Mammary epithelial cell (primary cell): ENCODE measurements at regions of chr10 and their contacts with region 1.

Region 1: DNA sequence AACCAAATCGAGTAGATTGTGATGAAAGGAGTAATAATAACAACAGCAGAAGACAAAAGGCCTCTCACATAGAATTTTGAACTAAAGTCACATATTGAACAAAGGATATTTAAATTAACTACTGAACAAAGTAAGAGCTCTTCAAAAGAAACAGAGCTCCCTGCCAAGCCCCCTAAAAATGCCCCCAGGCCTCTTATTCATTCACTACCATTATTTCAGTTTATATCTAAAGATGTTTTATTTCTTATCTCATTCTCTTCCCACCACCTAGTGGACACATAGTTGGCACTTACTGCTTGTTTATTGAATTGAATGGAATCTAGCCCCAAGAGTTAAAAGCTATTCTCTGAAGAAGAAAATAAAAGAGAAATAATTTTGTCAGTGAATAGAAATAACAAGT is 37.4 kb downstream of the VCL start:
- DNase-seq: no peak
- H3K4me3 ChIP-seq: no peak overlapping the region
- H3K27ac ChIP-seq: no peak overlapping the region
- H3K4me1 ChIP-seq: no peaks in the 10 kb centered on the region
- H3K27me3 ChIP-seq: no peaks in the 10 kb centered on the region
- CTCF ChIP-seq: peak; percentile 27 to 43

Region 2: GRCh38 chr10:73730153-73730906 is 305.0 kb before region 1 on chr10:
- CTCF ChIA-PET with region 1: no interaction called
- dilution Hi-C with region 1: no loop called
- in situ Hi-C with region 1: no loop called
- intact Hi-C with region 1: no loop called
- DNase-seq: peak; percentile 95
- H3K4me3 ChIP-seq: peak overlapping the region; percentile 81 to 94 (median 82)
- H3K27ac ChIP-seq: peak overlapping the region; percentile 68
- H3K4me1 ChIP-seq: peaks cover 4% of the 10 kb centered on the region
- H3K27me3 ChIP-seq: no peaks in the 10 kb centered on the region
- CTCF ChIP-seq: no peak

Region 3: DNA sequence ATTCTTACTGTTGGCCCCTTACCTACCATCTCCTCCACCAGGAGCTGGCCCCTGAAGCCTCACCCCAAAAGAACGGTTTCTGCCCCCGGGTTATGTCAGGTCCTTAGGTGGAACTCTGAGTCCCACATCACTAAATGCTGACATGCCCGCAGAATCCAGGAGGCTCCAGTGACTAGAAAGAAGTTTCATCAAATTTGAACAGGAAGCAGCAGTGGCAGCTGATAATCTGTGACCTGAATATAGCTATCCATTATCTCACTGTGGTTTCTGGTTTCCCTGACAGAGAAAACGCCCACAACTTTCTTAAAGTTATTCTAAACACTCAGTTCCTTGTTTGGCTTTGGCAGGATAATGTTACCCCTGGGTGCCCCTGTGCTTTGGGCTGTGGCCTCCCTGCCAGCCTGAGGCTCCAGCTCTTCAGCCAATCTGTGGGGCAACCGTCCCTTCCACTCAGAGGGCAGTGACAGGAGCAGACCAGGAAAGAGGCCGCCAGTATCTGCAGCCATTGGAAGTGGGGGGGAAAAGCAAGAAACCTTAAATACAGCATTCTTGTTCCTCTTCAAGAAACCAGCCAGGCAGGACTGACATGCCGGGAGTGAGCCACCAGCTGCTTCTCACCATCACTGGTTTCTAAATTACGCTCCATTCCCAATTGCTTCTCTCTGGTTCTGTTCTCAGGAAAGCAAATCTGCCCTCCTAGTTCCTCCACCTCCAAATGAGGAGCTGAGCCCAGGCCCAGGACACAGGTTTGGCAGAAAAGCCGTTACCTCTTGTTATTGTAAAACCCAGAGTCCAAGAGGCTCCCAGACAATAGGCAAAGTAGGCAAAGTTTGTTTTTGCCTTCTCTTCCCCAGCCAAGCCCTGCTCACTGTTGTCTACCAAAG is 78.6 kb before region 1 on chr10:
- CTCF ChIA-PET with region 1: no interaction called
- dilution Hi-C with region 1: no loop called
- in situ Hi-C with region 1: no loop called
- intact Hi-C with region 1: loop called (anchors 10 kb)
- DNase-seq: peak; percentile 55
- H3K4me3 ChIP-seq: no peak overlapping the region
- H3K27ac ChIP-seq: no peak overlapping the region
- H3K4me1 ChIP-seq: peaks cover 13% of the 10 kb centered on the region
- H3K27me3 ChIP-seq: no peaks in the 10 kb centered on the region
- CTCF ChIP-seq: no peak

Region 4: GRCh38 chr10:73997787-73998622 is 37.3 kb before region 1 on chr10 and contains the start of gene VCL:
- CTCF ChIA-PET with region 1: no interaction called
- dilution Hi-C with region 1: no loop called
- in situ Hi-C with region 1: no loop called
- intact Hi-C with region 1: loop called (anchors 1 kb)
- DNase-seq: peak; percentile 99
- H3K4me3 ChIP-seq: peak within 1 kb of the TSS; percentile 61 to 92 (median 90)
- H3K27ac ChIP-seq: peak within 1 kb of the TSS; percentile 72
- H3K4me1 ChIP-seq: peaks cover 26% of the 10 kb centered on the region
- H3K27me3 ChIP-seq: no peaks in the 10 kb centered on the region
- CTCF ChIP-seq: no peak
- total RNA-seq, gene VCL: 136 to 172 TPM

Region 5: DNA sequence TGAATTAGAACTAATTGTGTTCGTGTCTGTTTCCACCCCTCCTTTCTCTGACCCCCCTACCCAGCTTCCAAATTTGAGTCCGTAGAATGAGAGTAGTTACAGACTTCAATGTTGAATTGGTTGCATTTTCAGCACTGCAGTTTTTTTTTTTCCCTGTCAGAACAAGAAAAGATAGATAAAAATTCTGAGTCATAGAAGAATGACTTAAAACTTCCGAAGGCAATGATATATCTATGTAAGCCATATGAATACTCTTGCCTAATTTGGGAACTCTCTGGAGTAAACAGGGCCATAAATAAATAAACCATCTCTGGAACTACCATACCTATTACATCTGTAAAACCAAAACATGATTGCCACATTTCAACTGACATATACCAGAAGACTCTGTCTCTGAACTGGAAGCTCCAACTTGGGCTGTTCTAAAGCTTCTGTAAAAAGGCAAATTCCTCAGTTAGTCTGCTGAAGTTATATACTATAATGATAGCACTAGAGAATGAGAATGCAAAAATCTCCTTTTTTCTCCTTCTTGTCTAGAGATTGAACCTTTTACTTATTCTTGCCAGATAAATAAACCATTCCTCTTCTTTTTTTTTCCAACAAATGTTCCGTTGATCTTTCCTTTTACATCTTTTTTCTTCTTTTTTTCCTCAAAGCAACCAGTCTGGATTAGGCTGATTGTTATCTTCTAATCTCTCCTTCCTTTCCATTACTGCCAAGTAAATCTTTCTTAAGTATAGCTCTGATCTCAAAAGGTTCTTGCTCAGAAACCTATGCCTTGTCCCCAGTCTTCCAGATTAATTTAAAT is 13.9 kb before region 1 on chr10:
- CTCF ChIA-PET with region 1: interaction called, 10 read pairs
- dilution Hi-C with region 1: no loop called
- in situ Hi-C with region 1: no loop called
- intact Hi-C with region 1: no loop called
- DNase-seq: peak; percentile 77
- H3K4me3 ChIP-seq: no peak overlapping the region
- H3K27ac ChIP-seq: no peak overlapping the region
- H3K4me1 ChIP-seq: peaks cover 20% of the 10 kb centered on the region
- H3K27me3 ChIP-seq: no peaks in the 10 kb centered on the region
- CTCF ChIP-seq: no peak

Region 6: DNA sequence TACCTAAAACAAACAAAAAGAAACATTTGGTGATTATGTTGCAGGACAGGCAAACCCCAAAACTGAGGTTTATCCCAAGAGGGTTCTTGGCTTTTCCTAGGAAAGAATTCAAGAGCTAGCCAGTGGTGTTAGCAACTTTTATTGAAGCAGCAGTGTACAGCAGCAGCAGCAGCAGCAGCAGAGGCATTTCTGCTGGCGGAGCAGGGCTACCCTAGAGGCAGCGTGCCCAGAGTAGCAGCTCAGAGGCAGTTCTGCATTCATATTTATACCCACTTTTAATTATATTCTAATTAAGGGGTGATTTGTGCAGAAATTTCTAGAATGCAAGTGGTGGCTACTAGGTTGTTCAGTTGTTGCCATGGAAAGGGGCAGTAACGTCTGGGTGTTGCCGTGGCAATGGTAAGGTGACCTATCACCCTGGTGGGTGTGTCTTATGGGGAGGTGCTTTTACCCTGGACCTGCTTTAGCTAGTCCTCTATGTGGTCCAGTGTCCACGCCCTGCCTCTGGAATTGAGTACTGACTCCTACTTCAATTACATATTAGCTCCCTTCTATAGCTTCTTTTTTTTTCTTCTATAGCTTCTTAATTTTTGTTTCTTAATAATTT is 16.5 kb after region 1 on chr10:
- CTCF ChIA-PET with region 1: interaction called, 19 read pairs
- dilution Hi-C with region 1: no loop called
- in situ Hi-C with region 1: no loop called
- intact Hi-C with region 1: loop called (anchors 2 kb)
- DNase-seq: no peak
- H3K4me3 ChIP-seq: no peak overlapping the region
- H3K27ac ChIP-seq: no peak overlapping the region
- H3K4me1 ChIP-seq: peaks cover 19% of the 10 kb centered on the region
- H3K27me3 ChIP-seq: no peaks in the 10 kb centered on the region
- CTCF ChIP-seq: no peak

Region 7: DNA sequence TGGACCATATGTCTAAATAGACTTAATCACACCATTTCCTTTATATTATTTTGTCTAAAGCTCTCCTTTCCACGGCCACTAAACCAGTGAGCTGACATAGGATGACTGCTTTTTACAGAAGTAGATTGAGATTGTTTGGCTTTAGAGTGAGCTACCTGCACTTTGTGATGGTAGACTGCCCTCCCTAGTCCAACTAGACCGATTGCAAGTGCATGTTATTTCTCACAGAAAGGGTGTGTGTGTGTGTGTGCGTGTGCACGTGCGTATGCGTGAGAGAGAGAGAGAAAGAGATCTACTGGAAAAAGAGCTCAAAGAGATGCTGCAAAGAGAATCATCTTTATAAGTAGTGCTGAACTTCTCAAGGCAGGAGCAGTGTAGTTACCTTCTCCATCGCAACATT is 23.4 kb after region 1 on chr10:
- CTCF ChIA-PET with region 1: no interaction called
- dilution Hi-C with region 1: no loop called
- in situ Hi-C with region 1: no loop called
- intact Hi-C with region 1: loop called (anchors 2 kb)
- DNase-seq: no peak
- H3K4me3 ChIP-seq: no peak overlapping the region
- H3K27ac ChIP-seq: no peak overlapping the region
- H3K4me1 ChIP-seq: peaks cover 33% of the 10 kb centered on the region
- H3K27me3 ChIP-seq: no peaks in the 10 kb centered on the region
- CTCF ChIP-seq: no peak